Mammary epithelial cell (primary cell): ENCODE measurements at regions of chr17 and their contacts with region 1.

Region 1: GRCh38 chr17:81405411-81405872 is 10.2 kb downstream of the BAHCC1 start:
- DNase-seq: no peak
- H3K4me3 ChIP-seq: no peak overlapping the region
- H3K27ac ChIP-seq: no peak overlapping the region
- H3K4me1 ChIP-seq: peaks cover 4% of the 10 kb centered on the region
- H3K27me3 ChIP-seq: no peaks in the 10 kb centered on the region
- CTCF ChIP-seq: no peak

Region 2: DNA sequence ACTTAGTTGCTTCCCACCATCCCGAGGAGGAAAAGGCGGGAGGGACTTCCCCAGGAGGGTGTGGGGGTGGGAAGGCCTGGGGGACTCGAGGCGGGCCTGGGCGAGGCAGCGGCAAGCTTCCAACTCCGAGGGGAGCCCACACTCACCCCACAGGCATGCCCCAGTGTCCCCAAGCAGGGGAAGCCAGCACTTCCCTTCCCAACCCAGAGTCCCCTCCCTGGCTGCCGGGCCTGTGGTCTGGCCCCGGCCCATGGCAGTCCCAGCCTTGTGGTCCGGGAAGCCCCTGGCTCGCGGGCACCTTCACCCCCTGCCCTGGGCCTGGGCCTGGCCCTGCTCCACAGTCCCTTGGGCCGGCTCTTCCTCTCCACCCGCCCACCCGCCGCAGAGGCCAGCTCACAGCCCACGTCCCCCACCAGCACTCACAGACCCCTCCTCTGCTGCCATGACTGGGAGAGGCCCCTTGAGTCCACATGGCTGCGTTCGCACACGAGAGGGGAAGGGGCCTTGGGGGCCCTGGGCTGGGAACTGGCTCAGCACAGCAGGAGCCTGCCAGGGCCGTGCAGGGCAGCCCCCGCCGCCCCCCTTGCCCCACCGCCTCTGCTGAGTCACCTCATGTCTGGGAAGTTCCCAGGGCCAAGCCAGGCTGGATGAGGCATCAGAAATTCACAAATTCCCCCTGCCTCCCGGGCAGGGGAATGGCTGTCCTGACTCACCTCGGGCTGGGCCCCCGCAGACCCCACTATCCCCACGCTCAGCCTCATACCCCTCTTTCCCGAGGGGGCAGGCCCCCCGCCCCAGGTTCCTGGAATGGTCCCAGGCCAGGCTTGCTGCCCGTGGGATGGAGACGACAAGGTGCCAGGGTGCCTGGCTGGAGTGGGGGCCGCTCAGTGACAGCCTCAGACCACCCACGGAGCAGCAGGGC is 17.6 kb after region 1 on chr17:
- CTCF ChIA-PET with region 1: no interaction called
- dilution Hi-C with region 1: no loop called
- in situ Hi-C with region 1: no loop called
- intact Hi-C with region 1: loop called (anchors 1 kb)
- DNase-seq: peak; percentile 93
- H3K4me3 ChIP-seq: peak overlapping the region in 1 of 3 experiments; percentile 24
- H3K27ac ChIP-seq: peak overlapping the region; percentile 54
- H3K4me1 ChIP-seq: peaks cover 41% of the 10 kb centered on the region
- H3K27me3 ChIP-seq: no peaks in the 10 kb centered on the region
- CTCF ChIP-seq: no peak